GM10248 (cell line): ENCODE measurements at regions of chr14 and their contacts with region 1.

Region 1: GRCh38 chr14:21071225-21072030 is 1.3 kb downstream of the ARHGEF40 start:
- DNase-seq: peak; percentile 88
- CTCF ChIP-seq: no peak

Region 2: DNA sequence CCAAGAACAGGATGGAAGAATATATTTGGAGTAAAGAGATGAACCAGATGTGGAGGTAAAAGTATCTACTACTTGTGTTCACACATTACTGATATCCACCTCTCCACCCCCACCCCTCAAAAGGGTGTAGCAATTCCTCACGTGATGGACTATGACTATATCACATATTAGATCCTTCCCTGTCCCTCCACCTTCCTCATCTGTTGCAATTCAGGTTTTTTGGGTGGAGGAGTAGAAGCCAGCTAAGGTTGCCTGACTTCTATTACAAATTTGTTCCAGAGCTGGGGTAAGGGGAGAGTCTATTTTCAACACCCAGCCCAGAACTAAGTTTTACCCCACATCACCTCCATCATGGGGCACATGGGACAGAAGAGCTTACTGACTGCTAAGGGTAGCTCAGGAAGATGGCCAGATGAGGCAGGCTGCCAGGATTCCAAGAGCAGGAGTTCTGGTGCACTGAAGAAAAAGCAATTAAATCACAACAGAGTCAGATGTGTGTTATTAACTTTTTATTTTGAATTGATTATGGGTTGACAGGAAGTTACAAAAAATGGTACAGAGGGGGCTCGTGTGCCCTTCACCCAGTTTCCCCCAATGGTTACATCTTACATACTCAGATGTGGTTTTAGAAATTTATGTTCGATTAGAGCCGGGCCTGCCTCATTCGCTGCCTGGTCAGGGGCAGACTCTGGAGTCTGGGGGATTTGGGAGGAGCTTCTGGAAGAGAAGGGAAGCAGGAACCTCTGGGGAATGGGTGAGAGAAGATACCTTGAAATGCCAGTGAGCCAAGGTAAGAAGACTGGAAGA is 38.9 kb before region 1 on chr14:
- CTCF ChIA-PET with region 1: interaction called, 10 read pairs
- POLR2A ChIA-PET with region 1: no interaction called
- DNase-seq: no peak
- CTCF ChIP-seq: no peak

Region 3: GRCh38 chr14:21057803-21058675 is 13.4 kb before region 1 on chr14 and contains the start of gene RNASE8:
- CTCF ChIA-PET with region 1: interaction called, 11 read pairs
- POLR2A ChIA-PET with region 1: no interaction called
- DNase-seq: no peak
- CTCF ChIP-seq: no peak

Region 4: DNA sequence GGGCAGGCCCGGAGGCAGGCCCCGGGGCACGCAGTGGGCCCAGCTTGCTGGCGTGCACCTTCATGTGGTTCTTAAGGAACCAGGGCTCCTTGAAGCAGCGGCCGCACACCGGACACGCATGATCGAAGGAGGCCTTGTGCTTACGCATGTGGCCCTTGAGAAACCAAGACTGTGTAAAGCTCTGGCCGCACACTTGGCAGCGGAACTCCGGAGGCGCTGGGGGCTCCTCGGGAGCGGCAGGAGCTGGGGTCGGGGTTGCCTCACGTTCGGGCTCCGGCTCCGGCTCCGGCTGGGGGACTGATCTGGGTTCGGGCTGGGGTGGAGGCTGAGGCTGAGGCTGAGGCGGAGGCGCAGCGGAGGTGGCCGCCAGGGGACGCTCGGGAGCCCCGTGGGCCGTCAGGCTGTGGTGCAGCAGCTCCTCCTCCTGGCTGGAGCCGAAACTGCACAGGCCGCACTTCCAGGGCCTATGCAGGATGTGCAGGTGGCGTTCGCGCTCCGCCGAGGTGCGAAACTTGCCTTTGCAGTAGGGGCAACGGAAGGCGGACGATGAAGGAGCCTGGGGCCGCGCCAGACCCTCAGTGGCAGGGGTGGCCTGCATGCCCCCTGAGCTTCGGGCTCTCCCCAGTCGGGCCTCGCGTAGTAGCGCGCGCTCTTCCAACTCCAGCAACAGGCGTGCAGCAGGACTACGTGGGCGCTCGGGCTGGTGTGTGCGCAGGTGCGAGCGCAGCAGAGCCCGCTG is 21.0 kb after region 1 on chr14:
- CTCF ChIA-PET with region 1: interaction called, 130 read pairs
- POLR2A ChIA-PET with region 1: no interaction called
- DNase-seq: peak; percentile 92
- CTCF ChIP-seq: peak; percentile 100

Region 5: DNA sequence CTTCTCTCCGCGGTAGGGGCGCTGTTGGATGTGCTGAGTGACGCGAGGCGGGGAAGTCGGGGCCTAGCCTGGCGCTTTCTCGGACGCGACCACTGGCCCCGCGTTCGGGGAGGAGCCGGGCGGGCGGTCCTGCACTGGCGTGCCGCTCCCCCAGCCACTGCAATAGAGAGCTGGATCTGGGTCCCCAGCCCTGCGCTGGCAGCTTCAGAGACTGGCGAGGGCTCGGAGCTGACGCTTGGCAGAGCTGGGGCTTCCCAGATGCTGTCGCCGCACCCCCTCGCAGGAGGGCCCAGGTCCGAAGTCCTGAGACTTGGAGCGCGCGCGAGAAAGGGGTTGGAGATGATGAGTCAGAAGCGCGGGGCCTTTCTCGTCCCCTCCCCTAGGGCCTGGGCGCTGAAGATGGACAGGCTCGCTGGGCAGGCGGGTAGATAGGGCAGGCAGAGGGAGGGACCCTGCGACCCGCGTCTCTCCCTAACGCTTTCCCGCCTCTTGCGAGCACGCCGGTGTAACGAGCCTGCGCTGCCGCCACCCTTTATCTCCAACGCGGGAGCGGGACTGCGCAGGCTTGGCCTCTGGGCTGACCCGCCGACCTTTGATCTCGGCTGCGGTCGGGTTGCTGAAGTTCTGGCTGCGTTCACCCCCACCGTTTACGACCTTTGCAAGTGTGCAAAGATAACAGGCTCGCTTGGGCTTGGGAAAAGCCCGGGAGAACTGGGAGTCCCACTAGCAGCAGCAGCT is 32.5 kb after region 1 on chr14:
- CTCF ChIA-PET with region 1: interaction called, 130 read pairs
- POLR2A ChIA-PET with region 1: interaction called, 4 read pairs
- DNase-seq: peak; percentile 94
- CTCF ChIP-seq: peak; percentile 69

Region 6: GRCh38 chr14:21229821-21230220 is 158.4 kb after region 1 on chr14:
- CTCF ChIA-PET with region 1: no interaction called
- POLR2A ChIA-PET with region 1: no interaction called
- DNase-seq: no peak
- CTCF ChIP-seq: no peak

Region 7: GRCh38 chr14:21278632-21279031 is 207.2 kb after region 1 on chr14:
- CTCF ChIA-PET with region 1: no interaction called
- POLR2A ChIA-PET with region 1: no interaction called
- DNase-seq: no peak
- CTCF ChIP-seq: no peak